ENCODE measurements at regions of chr3 and their contacts with region 1.

Region 1: GRCh38 chr3:12891985-12892839 is 50.8 kb upstream of the RPL32 start:
- DNase-seq: peak; percentile 66
- ATAC-seq: peak; percentile 79
- H3K4me3 ChIP-seq: no peak overlapping the region
- H3K27ac ChIP-seq: no peak overlapping the region
- H3K4me1 ChIP-seq: no peaks in the 10 kb centered on the region
- H3K27me3 ChIP-seq: peaks cover 11% of the 10 kb centered on the region
- CTCF ChIP-seq: peak; percentile 96
- POLR2A ChIP-seq: no peak
- RAD21 ChIP-seq: peak; percentile 97

Region 2: DNA sequence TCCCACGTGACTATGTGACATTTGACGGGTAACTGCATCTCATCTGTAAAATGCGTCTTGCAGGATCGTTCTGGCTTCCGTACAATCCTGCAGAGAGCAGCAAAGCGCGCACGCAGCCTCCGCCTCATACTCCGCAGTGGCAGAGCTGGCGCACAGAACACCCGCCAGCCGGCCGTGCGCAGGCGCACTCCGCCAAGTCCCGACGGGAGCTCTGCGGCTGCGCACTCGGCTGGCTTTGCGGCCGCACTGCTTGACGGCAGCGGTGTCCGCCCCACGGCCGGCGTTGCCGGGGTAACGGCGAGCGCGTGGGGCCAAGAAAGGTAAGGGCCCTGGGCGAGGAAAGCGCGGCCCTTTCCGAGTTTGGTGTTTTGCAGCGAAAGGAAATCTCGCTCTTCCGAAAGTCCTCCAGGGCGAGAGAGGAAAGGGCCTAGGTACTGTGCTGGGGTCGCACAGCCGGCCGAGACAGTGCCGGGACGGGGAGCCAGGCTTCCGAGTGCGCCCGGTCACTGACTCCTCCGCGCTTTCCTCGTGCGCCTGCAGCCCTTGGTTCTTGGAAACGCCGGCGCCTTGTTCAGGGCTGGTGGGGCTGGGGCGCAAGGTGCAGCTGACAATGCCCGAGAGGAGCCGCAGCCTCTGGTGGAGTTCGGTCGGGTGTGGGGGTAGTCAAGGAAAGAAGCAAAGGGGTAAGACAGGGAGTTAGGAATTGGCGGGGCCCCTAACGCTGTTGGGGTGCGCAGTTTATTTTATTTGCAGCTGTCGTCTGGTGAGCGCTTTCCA is 407.8 kb before region 1 on chr3 and contains the start of gene TSEN2:
- CTCF ChIA-PET with region 1: interaction called, 5 read pairs
- POLR2A ChIA-PET with region 1: no interaction called
- dilution Hi-C with region 1: no loop called
- in situ Hi-C with region 1: no loop called
- intact Hi-C with region 1: loop called (anchors 1 kb)
- DNase-seq: peak; percentile 94
- ATAC-seq: peak; percentile 96
- H3K4me3 ChIP-seq: peak within 1 kb of the TSS; percentile 78
- H3K27ac ChIP-seq: peak within 1 kb of the TSS; percentile 76
- H3K4me1 ChIP-seq: no peaks in the 10 kb centered on the region; the same call in 1 of the 2 replicates
- H3K27me3 ChIP-seq: no peaks in the 10 kb centered on the region
- CTCF ChIP-seq: peak; percentile 47
- POLR2A ChIP-seq: no peak
- RAD21 ChIP-seq: peak; percentile 54
- total RNA-seq, gene TSEN2: 14.2 and 15.0 TPM in 2 replicates

Region 3: DNA sequence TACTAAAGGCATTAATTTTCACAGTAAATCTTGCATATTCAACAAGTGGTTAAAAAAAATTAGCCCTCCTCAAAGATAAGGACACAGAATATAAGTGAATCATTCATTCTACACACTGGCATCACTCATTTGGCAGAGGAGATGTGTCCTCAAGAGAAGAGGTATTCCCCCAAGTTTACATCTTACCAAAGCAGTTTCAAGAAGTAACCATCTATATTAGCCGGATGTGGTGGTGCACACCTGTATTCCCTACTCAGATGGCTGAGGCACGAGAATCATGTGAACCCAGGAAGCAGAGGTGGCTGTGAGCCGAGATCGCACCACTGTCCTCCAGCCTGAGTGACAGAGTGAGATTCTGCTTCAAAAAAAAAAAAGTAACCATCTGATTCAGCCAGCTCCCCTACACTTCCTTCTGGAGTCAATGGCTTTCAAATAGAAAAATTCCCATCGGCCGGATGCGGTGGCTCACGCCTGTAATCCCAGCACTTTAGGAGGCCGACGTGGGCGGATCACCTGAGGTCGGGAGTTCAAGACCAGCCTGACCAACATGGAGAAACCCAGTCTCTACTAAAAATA is 243.7 kb before region 1 on chr3:
- CTCF ChIA-PET with region 1: no interaction called
- POLR2A ChIA-PET with region 1: no interaction called
- dilution Hi-C with region 1: no loop called
- in situ Hi-C with region 1: no loop called
- intact Hi-C with region 1: no loop called
- DNase-seq: no peak
- ATAC-seq: no peak
- H3K4me3 ChIP-seq: no peak overlapping the region
- H3K27ac ChIP-seq: no peak overlapping the region
- H3K4me1 ChIP-seq: peaks cover 12% of the 10 kb centered on the region
- H3K27me3 ChIP-seq: no peaks in the 10 kb centered on the region
- CTCF ChIP-seq: no peak
- POLR2A ChIP-seq: no peak
- RAD21 ChIP-seq: no peak

Region 4: DNA sequence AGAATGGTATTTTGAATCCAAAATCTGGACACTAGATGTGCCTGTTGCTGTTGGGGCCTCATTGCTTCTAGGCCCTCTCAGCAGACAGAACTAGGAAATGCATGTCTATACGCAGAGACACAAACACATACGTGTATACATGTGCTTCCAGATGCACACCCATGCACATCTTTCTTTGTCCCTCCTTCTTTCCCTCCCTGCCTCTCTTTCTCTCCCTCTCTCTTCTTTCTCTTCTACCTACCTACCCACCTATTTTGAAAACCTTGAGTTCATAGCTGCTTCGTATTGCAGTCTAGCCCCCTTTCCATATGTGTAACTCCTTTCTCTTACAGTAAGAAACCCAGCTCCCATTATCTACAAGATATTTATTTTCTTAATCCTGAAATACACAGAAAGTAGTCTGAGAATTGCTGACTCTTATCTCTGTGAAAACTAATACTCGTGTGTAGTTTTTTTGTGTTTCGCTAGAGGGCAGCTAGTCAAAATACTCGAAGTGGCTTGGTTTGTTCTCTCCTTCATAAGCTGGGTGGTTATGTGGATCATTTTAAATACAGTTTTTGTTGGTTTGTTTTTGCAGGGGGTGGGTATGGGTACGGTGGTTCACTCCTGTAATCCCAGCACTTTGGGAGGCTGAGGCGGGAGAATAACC is 69.4 kb before region 1 on chr3:
- CTCF ChIA-PET with region 1: no interaction called
- POLR2A ChIA-PET with region 1: no interaction called
- dilution Hi-C with region 1: no loop called
- in situ Hi-C with region 1: no loop called
- intact Hi-C with region 1: loop called (anchors 1 kb)
- DNase-seq: peak; percentile 51
- ATAC-seq: peak; percentile 90
- H3K4me3 ChIP-seq: no peak overlapping the region
- H3K27ac ChIP-seq: no peak overlapping the region
- H3K4me1 ChIP-seq: no peaks in the 10 kb centered on the region; the same call in 1 of the 2 replicates
- H3K27me3 ChIP-seq: no peaks in the 10 kb centered on the region
- CTCF ChIP-seq: peak; percentile 35; the same call in 1 of the 2 replicates
- POLR2A ChIP-seq: no peak
- RAD21 ChIP-seq: no peak

Region 5: DNA sequence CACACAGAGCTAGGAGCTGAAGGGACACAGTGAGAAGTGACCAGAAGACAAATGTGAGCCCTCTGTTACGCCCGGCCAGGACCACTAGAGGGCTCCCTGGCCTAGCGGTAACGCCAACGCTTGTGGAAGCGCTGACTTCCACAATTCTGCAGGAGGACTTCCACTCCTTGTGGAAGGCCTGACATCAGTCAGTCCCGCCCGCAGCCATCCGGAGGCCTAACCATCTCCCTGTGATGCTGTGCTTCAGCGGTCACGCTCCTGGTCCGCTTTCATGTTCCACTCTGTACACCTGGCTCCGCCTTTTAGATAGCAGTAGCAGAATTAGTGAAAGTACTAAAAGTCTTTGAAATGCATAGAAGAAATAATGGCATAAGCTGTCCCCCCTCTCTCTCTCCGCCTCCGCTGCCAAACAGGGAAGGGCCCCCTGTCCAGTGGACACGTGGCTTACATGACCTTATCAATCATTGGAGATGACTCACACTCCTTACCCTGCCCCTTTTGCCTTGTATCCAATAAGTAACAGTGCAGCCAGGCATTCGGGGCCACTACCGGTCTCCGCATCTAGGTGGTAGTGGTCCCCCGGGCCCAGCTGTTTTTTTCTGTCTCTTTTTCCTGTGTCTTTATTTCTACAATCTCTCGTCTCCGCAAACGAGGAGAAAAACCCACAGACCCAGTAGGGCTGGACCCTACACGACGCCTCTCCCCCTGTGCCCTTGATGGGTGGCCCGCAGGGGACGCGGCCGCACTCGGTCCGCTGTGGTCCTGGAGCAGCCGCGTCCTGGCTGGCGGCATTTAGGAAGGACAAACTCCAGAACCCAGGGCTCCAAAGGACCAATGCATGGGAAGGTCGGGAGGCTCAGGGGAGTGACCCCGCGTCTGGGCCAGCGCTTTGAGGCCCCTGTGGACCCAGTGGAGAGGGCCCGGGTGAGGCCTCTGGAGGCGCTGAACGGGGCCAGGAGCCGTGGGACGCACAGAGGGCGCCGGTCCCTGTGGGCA is 23.9 kb before region 1 on chr3:
- CTCF ChIA-PET with region 1: interaction called, 4 read pairs
- POLR2A ChIA-PET with region 1: no interaction called
- dilution Hi-C with region 1: no loop called
- in situ Hi-C with region 1: no loop called
- intact Hi-C with region 1: loop called (anchors 1 kb)
- DNase-seq: peak; percentile 87
- ATAC-seq: peak; percentile 98
- H3K4me3 ChIP-seq: no peak overlapping the region
- H3K27ac ChIP-seq: no peak overlapping the region
- H3K4me1 ChIP-seq: no peaks in the 10 kb centered on the region; the same call in 1 of the 2 replicates
- H3K27me3 ChIP-seq: peaks cover 26% of the 10 kb centered on the region
- CTCF ChIP-seq: peak; percentile 95
- POLR2A ChIP-seq: 0 out of 2 replicates have a peak, but pooled peaks have one; percentile 24
- RAD21 ChIP-seq: peak; percentile 86

Region 6: GRCh38 chr3:13145131-13145825 is 253.1 kb after region 1 on chr3:
- CTCF ChIA-PET with region 1: no interaction called
- POLR2A ChIA-PET with region 1: no interaction called
- dilution Hi-C with region 1: no loop called
- in situ Hi-C with region 1: no loop called
- intact Hi-C with region 1: no loop called
- DNase-seq: no peak
- ATAC-seq: no peak
- H3K4me3 ChIP-seq: no peak overlapping the region
- H3K27ac ChIP-seq: no peak overlapping the region
- H3K4me1 ChIP-seq: no peaks in the 10 kb centered on the region
- H3K27me3 ChIP-seq: peaks cover 10% of the 10 kb centered on the region; the same call in 1 of the 2 replicates
- CTCF ChIP-seq: no peak
- POLR2A ChIP-seq: no peak
- RAD21 ChIP-seq: no peak

Measured in IMR-90 (cell line).